GM18951 (cell line): ENCODE measurements at regions of chr11 and their contacts with region 1.

Region 1: DNA sequence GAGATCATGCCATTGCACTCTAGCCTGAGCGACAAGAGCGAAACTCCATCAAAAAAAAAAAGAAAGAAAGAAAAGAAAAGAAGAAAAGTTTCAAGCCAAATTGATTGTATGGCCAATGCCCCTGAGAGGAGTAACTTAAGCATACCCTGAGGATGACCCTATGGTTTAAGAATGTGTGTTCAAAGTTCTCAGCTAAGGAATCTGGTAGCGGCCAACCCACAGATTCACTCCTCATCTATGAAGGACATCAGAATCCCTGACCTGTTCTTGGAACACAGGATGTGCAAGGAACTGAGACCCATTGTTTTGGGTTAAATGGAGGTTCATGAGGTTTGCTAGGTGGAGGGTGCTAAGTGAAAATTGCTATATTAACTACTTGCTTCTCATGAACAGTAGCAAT is 18.1 kb downstream of the IZUMO1R start:
- POLR2A ChIP-seq: no peak

Region 2: GRCh38 chr11:93895106-93895862 is 427.2 kb before region 1 on chr11:
- in situ Hi-C with region 1: no loop called
- POLR2A ChIP-seq: no peak

Region 3: DNA sequence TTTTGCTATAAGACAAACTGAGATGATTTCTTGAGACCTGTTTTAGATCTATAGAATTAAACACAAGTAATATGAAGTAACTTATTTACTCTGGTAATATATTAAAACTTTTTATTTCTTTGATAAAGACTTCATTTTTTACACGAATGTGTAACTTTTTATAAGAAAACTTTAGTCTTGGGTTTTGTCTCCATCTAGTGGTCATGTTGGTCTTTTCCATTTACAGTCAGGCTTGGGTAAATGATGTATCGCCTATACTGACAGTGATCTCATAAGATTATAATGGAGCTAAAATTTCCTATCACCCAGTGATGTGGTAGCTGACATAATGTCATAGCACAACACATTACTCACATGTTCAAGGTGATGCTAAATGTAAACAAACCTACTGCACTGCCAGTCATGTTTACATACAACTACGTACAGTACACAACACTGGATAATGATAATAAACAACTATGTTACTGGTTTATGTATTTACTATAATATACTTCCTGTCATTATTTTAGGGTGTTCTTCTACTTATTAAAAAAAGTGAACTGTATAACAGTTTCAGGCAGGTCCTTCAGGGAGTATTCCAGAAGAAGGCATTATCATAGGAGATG is 182.3 kb after region 1 on chr11:
- in situ Hi-C with region 1: loop called (anchors 5 kb)
- POLR2A ChIP-seq: no peak

Region 4: DNA sequence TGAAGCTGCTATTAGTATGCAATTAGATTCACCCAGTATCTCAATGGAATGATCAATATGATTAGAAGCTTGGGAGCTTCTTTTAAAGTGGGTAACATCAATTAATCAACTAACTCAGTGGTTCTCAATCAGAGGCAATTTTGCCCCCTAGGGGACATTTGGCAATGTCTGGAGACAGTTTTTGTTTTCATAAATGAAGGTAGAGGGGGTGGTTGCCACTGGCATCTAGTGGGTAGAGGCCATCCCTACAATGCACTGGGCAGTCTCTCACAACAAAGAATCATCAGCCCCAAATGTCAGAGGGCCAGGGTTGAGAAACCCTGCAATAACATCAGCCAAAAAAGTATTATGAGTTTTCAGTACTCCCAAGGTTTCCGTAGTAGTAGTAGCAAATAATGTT is 439.7 kb after region 1 on chr11:
- in situ Hi-C with region 1: no loop called
- POLR2A ChIP-seq: no peak